CD4-positive, alpha-beta T cell (primary cell): ENCODE measurements at regions of chr14 and their contacts with region 1.

Region 1: GRCh38 chr14:21498553-21499526 is 12.3 kb downstream of the METTL3 start:
- DNase-seq: peak in 5 of 14 experiments; percentile 14 to 81 (median 65)
- ATAC-seq: peak; percentile 77
- H3K4me3 ChIP-seq: no peak overlapping the region
- H3K4me3 Mint-ChIP-seq: no peak overlapping the region
- H3K27ac ChIP-seq: peak overlapping the region in 1 of 2 donors; percentile 4
- H3K27ac Mint-ChIP-seq: peak overlapping the region; percentile 73
- H3K4me1 ChIP-seq: peaks cover 7% of the 10 kb centered on the region
- H3K4me1 Mint-ChIP-seq: peaks cover 30% of the 10 kb centered on the region
- H3K27me3 ChIP-seq: no peaks in the 10 kb centered on the region
- H3K27me3 Mint-ChIP-seq: no peaks in the 10 kb centered on the region
- CTCF ChIP-seq: peak; percentile 69

Region 2: DNA sequence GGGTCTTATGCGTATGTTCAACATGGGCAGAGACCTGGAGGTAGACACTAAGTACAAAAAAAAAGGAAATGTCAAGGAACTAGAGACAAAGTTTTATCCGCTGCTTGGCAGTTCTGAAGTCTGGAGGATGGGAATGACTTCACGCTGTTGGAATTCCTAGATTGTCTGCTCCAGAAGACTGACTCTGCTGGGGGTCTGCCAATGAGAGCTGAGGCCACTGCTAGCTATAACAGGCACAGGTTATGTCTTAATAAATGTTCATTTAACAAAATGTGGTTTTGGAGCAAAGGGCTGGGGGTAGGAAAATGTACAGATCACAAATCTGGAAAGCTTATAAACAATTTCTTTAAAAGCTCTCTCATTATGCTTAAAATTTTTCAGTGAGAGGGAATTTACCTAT is 435.4 kb before region 1 on chr14:
- CTCF ChIA-PET with region 1: no interaction called
- POLR2A ChIA-PET with region 1: no interaction called
- intact Hi-C with region 1: no loop called
- DNase-seq: no peak
- ATAC-seq: no peak
- H3K4me3 ChIP-seq: no peak overlapping the region
- H3K4me3 Mint-ChIP-seq: no peak overlapping the region
- H3K27ac ChIP-seq: no peak overlapping the region
- H3K27ac Mint-ChIP-seq: no peak overlapping the region
- H3K4me1 ChIP-seq: peaks cover 2% of the 10 kb centered on the region
- H3K4me1 Mint-ChIP-seq: peaks cover 4% of the 10 kb centered on the region
- H3K27me3 ChIP-seq: peaks cover 18 to 28% of the 10 kb centered on the region in 2 experiments
- H3K27me3 Mint-ChIP-seq: peaks cover 79% of the 10 kb centered on the region
- CTCF ChIP-seq: no peak

Region 3: DNA sequence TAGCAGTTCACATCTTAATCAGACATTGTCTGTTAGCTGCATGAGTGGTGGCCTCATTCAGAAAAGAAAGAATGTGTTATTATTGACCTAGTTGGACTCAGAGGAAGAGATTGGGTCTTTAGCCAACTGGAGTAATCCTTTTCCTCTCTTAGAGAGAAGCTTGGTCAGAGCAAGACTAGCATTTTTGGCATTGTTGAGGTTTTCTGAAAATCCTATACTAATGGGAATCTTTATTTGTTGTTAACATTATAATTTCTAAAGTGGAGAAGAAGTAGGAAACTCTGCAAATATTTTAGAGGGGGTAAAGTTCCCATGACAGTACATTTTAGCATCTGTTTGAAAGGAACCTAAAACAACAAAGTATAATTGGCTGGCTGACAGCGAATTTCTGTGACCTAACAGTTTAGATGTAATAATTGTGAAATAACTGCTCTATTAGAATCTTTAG is 12.2 kb before region 1 on chr14:
- CTCF ChIA-PET with region 1: interaction called, 13 read pairs
- POLR2A ChIA-PET with region 1: interaction called, 3 read pairs
- intact Hi-C with region 1: no loop called
- DNase-seq: no peak
- ATAC-seq: no peak
- H3K4me3 ChIP-seq: no peak overlapping the region
- H3K4me3 Mint-ChIP-seq: no peak overlapping the region
- H3K27ac ChIP-seq: no peak overlapping the region
- H3K27ac Mint-ChIP-seq: no peak overlapping the region
- H3K4me1 ChIP-seq: peaks cover 5% of the 10 kb centered on the region
- H3K4me1 Mint-ChIP-seq: no peaks in the 10 kb centered on the region
- H3K27me3 ChIP-seq: no peaks in the 10 kb centered on the region
- H3K27me3 Mint-ChIP-seq: no peaks in the 10 kb centered on the region
- CTCF ChIP-seq: no peak

Region 4: DNA sequence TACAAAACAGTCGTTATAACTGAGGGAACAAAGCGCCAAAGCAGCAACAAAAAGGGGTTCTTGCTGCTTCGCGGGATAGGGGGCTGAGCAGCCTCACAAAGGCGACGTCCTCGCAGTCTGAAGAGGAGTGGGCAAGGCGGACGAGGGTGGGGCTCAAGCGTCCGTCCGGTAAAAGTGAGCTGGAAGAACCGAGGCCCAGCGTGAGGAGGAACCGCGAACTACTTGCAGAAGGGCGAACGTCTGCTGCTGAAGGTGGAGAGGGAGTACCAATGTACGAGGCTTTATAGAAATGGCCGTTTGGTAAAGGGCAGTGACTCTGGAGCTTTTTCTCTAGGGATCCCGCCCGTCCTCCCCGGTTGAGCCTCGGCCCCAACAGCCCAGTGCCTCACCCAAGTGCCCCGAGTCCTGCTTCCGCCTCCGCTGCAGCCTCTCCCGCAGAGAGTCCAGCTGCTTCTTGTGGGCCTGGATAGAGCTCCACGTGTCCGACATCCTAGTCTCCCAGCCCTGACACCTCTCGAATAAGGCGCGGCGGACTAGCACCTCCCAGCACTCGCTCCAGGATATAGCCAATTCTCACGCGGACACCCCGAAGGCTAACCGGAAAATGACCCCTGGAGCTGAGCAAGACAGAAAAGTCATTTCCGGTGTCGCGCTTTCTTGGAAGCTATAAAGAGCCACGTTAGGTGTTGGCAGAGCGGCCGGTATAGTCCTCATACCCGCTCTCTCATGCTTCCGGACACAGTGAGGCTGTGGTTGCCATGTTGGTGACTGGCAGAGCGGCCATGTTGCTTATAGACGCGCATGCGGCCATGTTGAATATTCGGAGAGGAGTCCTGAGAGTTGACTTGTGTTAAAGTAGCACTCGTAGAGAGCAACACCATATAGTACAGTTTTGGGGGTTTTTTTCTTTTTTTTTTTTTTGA is 12.2 kb after region 1 on chr14 and contains the start of gene METTL3:
- CTCF ChIA-PET with region 1: interaction called, 31 read pairs
- POLR2A ChIA-PET with region 1: interaction called, 24 read pairs
- intact Hi-C with region 1: no loop called
- DNase-seq: peak; percentile 88 to 98 (median 90)
- ATAC-seq: peak; percentile 99
- H3K4me3 ChIP-seq: peak within 1 kb of the TSS; percentile 83
- H3K4me3 Mint-ChIP-seq: peak within 1 kb of the TSS; percentile 98
- H3K27ac ChIP-seq: peak within 1 kb of the TSS; percentile 82 to 84
- H3K27ac Mint-ChIP-seq: peak within 1 kb of the TSS; percentile 98
- H3K4me1 ChIP-seq: peaks cover 30% of the 10 kb centered on the region
- H3K4me1 Mint-ChIP-seq: peaks cover 45% of the 10 kb centered on the region
- H3K27me3 ChIP-seq: no peaks in the 10 kb centered on the region
- H3K27me3 Mint-ChIP-seq: no peaks in the 10 kb centered on the region
- CTCF ChIP-seq: no peak
- total RNA-seq, gene METTL3: 31.9 to 34.5 TPM

Region 5: DNA sequence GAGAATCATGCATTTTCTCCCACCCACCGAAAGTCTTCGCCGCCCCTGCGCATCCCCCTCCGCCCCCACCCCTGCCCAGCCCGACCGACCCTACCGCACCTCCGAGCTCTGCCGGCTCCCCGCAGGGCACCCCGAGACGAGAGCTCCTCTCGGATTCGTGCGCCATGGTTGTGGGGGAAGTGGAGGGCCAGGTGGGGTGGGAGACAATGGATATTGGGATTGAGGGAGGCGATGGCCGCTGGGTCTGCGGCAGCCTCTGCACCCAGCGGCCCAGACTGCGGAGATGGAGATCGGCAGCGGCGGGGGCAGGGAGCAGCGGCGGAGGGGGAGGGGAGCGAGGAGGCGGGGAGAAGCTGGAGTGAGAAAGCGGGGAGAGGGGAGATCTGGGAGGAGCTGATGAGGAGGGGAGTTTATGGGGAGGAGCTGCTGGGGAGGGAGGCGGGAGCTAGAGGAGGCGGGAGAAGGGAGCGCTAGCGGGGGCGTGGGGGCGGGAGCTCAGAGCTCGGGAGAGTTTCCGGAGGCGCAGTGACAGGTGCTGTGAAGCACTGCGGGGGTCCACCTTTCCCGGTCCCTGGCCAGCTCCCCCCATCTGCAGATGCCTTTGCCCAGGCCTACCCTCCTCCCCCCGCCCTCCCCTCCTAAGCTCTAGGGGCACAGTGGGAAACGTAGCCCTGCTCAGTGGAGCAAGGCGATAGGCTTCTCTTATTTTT is 27.3 kb after region 1 on chr14 and contains the start of gene SALL2:
- CTCF ChIA-PET with region 1: interaction called, 3 read pairs
- POLR2A ChIA-PET with region 1: interaction called, 12 read pairs
- intact Hi-C with region 1: no loop called
- DNase-seq: peak; percentile 18 to 85 (median 61)
- ATAC-seq: peak; percentile 88
- H3K4me3 ChIP-seq: peak within 1 kb of the TSS; percentile 74
- H3K4me3 Mint-ChIP-seq: peak within 1 kb of the TSS; percentile 96
- H3K27ac ChIP-seq: peak within 1 kb of the TSS in 1 of 2 donors; percentile 7
- H3K27ac Mint-ChIP-seq: peak within 1 kb of the TSS; percentile 55
- H3K4me1 ChIP-seq: peaks cover 13% of the 10 kb centered on the region
- H3K4me1 Mint-ChIP-seq: peaks cover 22% of the 10 kb centered on the region
- H3K27me3 ChIP-seq: no peaks in the 10 kb centered on the region
- H3K27me3 Mint-ChIP-seq: no peaks in the 10 kb centered on the region
- CTCF ChIP-seq: no peak
- total RNA-seq, gene SALL2: 2.8 to 2.9 TPM

Region 6: GRCh38 chr14:21557084-21557901 is 58.5 kb after region 1 on chr14:
- CTCF ChIA-PET with region 1: interaction called, 24 read pairs
- POLR2A ChIA-PET with region 1: interaction called, 7 read pairs
- intact Hi-C with region 1: loop called (anchors 1 kb)
- DNase-seq: peak; percentile 40 to 91 (median 70)
- ATAC-seq: peak; percentile 70
- H3K4me3 ChIP-seq: peak overlapping the region; percentile 36
- H3K4me3 Mint-ChIP-seq: no peak overlapping the region
- H3K27ac ChIP-seq: no peak overlapping the region
- H3K27ac Mint-ChIP-seq: no peak overlapping the region
- H3K4me1 ChIP-seq: peaks cover 4% of the 10 kb centered on the region
- H3K4me1 Mint-ChIP-seq: peaks cover 6% of the 10 kb centered on the region
- H3K27me3 ChIP-seq: no peaks in the 10 kb centered on the region
- H3K27me3 Mint-ChIP-seq: no peaks in the 10 kb centered on the region
- CTCF ChIP-seq: peak; percentile 80